ENCODE measurements at regions of chr7 and their contacts with region 1.

Region 1: DNA sequence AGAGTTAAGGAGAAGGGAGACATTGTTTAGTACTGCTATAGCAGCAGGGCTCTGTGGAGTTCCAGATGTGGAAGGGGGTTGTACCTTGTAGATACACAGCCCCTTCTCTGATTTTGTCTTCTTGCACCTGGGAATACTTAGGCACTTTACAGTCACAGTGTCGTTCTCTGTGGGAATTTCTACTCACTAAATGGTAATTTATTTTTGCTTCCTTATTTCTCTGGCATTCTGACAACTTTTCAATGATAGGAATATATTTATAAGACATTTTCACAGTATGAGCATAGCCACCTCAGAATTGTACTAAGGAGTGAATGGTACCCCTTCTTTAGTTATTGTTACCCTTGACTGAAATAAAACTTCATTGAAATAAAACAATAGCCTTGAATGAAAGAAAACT is 132.8 kb downstream of the SUGCT start:
- DNase-seq: no peak
- H3K4me3 ChIP-seq: no peak overlapping the region
- H3K27ac ChIP-seq: no peak overlapping the region
- H3K27me3 ChIP-seq: no peaks in the 10 kb centered on the region
- CTCF ChIP-seq: no peak

Region 2: DNA sequence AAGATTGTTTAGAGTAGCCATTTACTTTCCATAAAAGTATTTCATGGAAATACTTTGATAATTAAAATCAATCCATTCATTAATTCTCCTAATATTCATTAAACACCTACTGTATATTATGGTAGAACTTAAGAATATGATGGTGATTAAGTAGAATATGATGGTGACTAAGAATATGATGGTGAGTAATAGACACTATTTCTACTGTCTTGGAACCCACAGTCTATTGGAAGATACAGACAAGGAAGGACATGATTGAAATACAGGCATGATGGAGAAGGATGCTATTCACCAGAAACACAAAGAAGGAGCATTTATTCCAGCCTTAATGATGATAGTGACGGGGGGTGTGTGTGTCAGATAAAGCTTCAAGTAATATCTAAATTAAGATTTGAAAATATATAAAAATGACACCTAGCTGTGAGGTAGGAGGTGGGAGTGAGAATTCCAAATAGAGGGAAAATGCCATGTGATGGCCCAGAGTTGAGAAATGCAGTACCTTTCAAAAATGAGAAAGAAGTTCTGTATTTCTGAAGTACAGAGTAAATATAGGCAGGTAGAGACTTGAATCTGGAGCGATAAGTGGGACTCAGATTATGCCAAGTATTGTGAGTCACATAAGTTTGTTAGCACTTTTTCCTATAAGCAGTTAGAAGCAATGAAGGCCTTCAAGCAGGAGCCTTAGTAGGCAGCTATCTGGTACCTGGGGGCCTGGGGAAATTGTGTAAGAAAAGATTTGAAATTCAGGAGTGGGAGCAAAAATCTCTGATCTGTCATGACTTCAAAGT is 330.0 kb before region 1 on chr7:
- CTCF ChIA-PET with region 1: no interaction called
- POLR2A ChIA-PET with region 1: no interaction called
- DNase-seq: no peak
- H3K4me3 ChIP-seq: no peak overlapping the region
- H3K27ac ChIP-seq: no peak overlapping the region
- H3K27me3 ChIP-seq: peaks cover 4% of the 10 kb centered on the region
- CTCF ChIP-seq: no peak

Region 3: GRCh38 chr7:40329601-40330153 is 62.1 kb after region 1 on chr7:
- CTCF ChIA-PET with region 1: interaction called, 10 read pairs
- POLR2A ChIA-PET with region 1: no interaction called
- DNase-seq: peak; percentile 32
- H3K4me3 ChIP-seq: no peak overlapping the region
- H3K27ac ChIP-seq: no peak overlapping the region
- H3K27me3 ChIP-seq: no peaks in the 10 kb centered on the region
- CTCF ChIP-seq: peak; percentile 73

Region 4: DNA sequence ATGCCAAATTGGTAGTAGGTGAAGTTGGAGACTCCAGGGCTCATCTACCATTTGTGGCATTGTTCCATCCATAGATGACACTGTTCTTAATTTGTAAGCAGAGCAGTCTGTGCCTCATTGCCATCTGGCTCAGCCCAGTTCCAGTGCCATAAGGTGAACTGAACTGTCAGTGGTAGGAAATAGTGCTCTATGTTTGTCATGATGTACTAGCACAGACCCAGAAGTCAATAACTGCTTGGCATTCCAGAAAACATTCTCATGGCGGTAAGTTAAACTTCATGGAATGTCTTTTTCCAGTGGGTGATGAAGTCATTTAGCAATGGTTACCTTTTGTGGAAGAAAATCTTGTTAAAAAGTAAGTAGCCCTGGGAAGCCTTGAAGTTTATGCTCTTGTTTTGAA is 169.9 kb after region 1 on chr7:
- CTCF ChIA-PET with region 1: no interaction called
- POLR2A ChIA-PET with region 1: no interaction called
- DNase-seq: peak; percentile 76
- H3K4me3 ChIP-seq: no peak overlapping the region
- H3K27ac ChIP-seq: peak overlapping the region; percentile 71
- H3K27me3 ChIP-seq: no peaks in the 10 kb centered on the region
- CTCF ChIP-seq: no peak